RWPE1 (cell line): ENCODE measurements at regions of chr20 and their contacts with region 1.

Region 1: GRCh38 chr20:59455402-59456341 is 148.7 kb upstream of the PHACTR3 start:
- DNase-seq: peak; percentile 64
- H3K27ac ChIP-seq: no peak overlapping the region
- CTCF ChIP-seq: peak; percentile 72

Region 2: GRCh38 chr20:58864350-58864749 is 591.3 kb before region 1 on chr20:
- CTCF ChIA-PET with region 1: interaction called, 22 read pairs
- POLR2A ChIA-PET with region 1: no interaction called
- DNase-seq: no peak
- H3K27ac ChIP-seq: no peak overlapping the region
- CTCF ChIP-seq: peak; percentile 53

Region 3: GRCh38 chr20:58870239-58871014 is 585.2 kb before region 1 on chr20:
- CTCF ChIA-PET with region 1: interaction called, 22 read pairs
- POLR2A ChIA-PET with region 1: no interaction called
- DNase-seq: peak; percentile 92
- H3K27ac ChIP-seq: no peak overlapping the region
- CTCF ChIP-seq: peak; percentile 99

Region 4: DNA sequence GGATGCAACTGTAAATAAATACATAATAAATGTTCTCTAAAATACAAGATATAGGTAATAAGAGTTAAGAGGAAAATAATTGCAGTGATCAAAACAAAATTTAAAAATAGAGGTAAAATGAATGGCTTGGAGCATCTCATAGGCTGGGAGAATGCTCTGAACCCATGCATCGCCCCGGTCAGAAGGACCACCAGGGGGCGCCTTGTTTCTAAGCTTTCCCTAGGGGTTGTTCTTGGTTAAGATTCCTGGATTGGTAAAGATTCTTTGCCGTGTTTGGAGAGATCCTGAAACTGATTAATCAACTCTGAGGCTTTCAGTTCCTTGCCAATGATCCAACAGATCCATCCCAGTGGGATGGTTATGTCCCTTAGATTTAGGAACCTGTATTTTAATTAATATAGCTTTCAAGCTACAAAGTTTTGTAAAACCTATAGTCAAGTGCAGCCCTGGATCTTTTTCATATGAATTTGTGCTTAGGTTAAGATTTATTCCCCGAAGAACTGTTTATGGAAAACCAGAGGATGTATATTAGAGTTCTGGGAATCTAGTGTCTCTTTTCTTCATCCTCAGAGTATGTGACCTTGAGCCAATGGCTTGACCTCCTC is 367.7 kb before region 1 on chr20:
- CTCF ChIA-PET with region 1: interaction called, 25 read pairs
- POLR2A ChIA-PET with region 1: no interaction called
- DNase-seq: peak; percentile 88
- H3K27ac ChIP-seq: no peak overlapping the region
- CTCF ChIP-seq: peak; percentile 98

Region 5: GRCh38 chr20:59222253-59223181 is 233.2 kb before region 1 on chr20:
- CTCF ChIA-PET with region 1: interaction called, 16 read pairs
- POLR2A ChIA-PET with region 1: no interaction called
- DNase-seq: peak; percentile 92
- H3K27ac ChIP-seq: no peak overlapping the region
- CTCF ChIP-seq: peak; percentile 100

Region 6: GRCh38 chr20:59437601-59438031 is 18.1 kb before region 1 on chr20:
- CTCF ChIA-PET with region 1: interaction called, 11 read pairs
- POLR2A ChIA-PET with region 1: no interaction called
- DNase-seq: no peak
- H3K27ac ChIP-seq: no peak overlapping the region
- CTCF ChIP-seq: no peak

Region 7: DNA sequence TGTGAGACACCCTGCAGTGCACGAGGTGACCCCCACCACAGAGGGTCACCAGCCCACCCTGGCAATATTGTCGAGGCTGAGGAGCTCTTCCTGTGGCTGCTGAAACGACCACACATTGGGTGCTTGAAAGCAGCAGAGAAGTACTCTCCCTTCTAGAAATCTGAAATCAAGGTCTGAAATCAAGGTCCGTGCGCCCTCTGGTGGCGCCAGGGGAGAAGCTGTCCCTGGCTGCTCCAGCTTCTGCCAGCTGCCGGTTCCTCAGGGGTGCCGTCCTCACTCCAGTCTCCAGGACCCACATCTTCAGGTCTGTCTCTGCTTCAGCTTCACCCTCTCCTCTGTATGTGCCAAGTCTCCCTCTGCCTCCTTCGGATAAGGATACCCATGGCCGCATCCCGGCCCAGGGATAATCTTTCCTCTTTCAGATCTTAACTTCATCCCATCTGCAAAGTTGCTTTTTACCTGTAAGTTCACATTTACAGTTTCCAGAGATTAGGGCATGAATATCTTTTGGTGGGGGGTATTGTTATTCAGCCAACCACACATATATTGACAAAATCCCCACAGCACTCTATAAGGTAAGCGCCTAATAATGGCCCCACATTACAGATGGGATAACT is 40.3 kb after region 1 on chr20:
- CTCF ChIA-PET with region 1: interaction called, 10 read pairs
- POLR2A ChIA-PET with region 1: no interaction called
- DNase-seq: peak; percentile 79
- H3K27ac ChIP-seq: no peak overlapping the region
- CTCF ChIP-seq: peak; percentile 99